HEK293 (cell line): ENCODE measurements at regions of chr5 and their contacts with region 1.

Region 1: GRCh38 chr5:51398875-51399642 is 15.8 kb downstream of the ISL1 start:
- H3K4me3 ChIP-seq: peak overlapping the region; percentile 25
- H3K27ac ChIP-seq: peak overlapping the region; percentile 27; the same call in 1 of the 2 replicates
- H3K4me1 ChIP-seq: peaks cover 7% of the 10 kb centered on the region; the same call in 1 of the 2 replicates
- CTCF ChIP-seq: no peak

Region 2: DNA sequence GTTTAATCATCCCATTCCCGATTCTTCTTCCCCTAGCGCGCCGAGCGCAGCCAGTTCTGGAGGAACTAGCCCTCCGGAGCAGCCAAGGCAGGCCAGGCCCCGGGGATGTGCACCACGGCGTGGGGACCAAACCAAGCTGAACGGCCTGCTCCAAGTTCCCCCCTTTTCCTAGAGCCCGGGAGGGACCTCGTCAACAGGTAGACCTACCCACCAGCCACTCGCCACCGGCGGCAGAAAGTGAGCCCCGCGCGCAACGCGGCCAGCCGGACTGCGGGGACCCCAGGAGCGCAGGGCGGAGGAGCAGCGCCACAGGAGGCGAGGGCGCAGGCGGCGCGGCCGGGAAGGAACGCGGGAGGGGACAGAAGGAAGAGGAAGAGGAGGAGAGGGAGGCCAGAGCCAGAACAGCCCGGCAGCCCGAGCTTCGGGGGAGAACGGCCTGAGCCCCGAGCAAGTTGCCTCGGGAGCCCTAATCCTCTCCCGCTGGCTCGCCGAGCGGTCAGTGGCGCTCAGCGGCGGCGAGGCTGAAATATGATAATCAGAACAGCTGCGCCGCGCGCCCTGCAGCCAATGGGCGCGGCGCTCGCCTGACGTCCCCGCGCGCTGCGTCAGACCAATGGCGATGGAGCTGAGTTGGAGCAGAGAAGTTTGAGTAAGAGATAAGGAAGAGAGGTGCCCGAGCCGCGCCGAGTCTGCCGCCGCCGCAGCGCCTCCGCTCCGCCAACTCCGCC is 16.1 kb before region 1 on chr5 and contains the start of gene ISL1:
- CTCF ChIA-PET with region 1: interaction called, 4 read pairs
- POLR2A ChIA-PET with region 1: interaction called, 17 read pairs
- H3K4me3 ChIP-seq: peak within 1 kb of the TSS; percentile 74
- H3K27ac ChIP-seq: peak within 1 kb of the TSS; percentile 89
- H3K4me1 ChIP-seq: peaks cover 14% of the 10 kb centered on the region
- CTCF ChIP-seq: no peak